ENCODE measurements at regions of chr5 and their contacts with region 1.

Region 1: GRCh38 chr5:152542741-152543140 is 137.7 kb upstream of the NMUR2 start:
- DNase-seq: peak; percentile 3 to 17 (median 9)
- H3K4me3 ChIP-seq: no peak overlapping the region
- H3K27ac ChIP-seq: no peak overlapping the region
- H3K4me1 ChIP-seq: no peaks in the 10 kb centered on the region
- H3K27me3 ChIP-seq: peaks cover 0 to 10% (median 2%) of the 10 kb centered on the region in 5 experiments

Region 2: DNA sequence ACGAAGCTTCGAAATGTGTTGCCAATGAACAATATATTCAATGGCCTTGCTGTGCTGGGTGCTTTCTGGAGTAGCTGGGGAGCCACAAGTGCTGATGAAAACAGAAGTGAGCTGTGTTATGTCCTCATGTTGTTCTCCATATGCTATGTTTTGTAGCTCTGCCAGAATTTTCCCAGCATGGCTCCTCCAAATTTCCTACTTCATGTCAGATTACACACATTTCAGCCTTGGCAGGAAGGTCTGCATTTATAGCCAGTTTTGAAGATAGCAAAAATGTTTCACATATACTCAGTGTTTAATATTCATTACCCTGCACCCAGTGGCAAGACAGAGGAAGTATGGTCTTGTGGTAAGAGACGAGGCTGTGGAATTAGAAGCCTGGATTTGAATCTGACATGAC is 115.0 kb before region 1 on chr5:
- CTCF ChIA-PET with region 1: no interaction called
- POLR2A ChIA-PET with region 1: no interaction called
- DNase-seq: no peak
- H3K4me3 ChIP-seq: no peak overlapping the region
- H3K27ac ChIP-seq: no peak overlapping the region
- H3K4me1 ChIP-seq: no peaks in the 10 kb centered on the region
- H3K27me3 ChIP-seq: no peaks in the 10 kb centered on the region

Region 3: GRCh38 chr5:152505442-152506042 is 37.2 kb before region 1 on chr5:
- CTCF ChIA-PET with region 1: no interaction called
- POLR2A ChIA-PET with region 1: no interaction called
- DNase-seq: peak; percentile 39 to 68 (median 68)
- H3K4me3 ChIP-seq: no peak overlapping the region
- H3K27ac ChIP-seq: no peak overlapping the region
- H3K4me1 ChIP-seq: no peaks in the 10 kb centered on the region
- H3K27me3 ChIP-seq: peaks cover 0 to 1% (median 0%) of the 10 kb centered on the region in 5 experiments

Region 4: DNA sequence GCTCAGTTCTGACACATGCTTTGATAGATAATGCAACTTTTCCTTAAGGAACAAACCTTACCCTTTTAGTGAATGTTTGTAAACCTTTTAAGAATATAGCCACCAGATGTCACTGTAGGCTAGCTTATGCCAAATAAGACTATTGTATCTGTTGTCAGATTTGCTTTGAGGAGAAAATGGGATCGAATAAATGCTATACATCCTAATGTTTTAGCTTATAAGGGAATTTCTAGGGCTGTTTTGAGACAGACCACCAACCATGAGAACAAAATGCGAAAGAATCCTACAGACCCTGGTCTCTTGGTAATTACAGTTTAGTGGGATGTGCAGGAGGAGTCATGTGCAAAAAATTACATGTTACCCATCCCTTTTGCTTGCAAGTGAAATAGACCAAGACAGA is 10.0 kb before region 1 on chr5:
- CTCF ChIA-PET with region 1: interaction called, 10 read pairs
- POLR2A ChIA-PET with region 1: no interaction called
- DNase-seq: peak; percentile 45 to 67 (median 60)
- H3K4me3 ChIP-seq: no peak overlapping the region
- H3K27ac ChIP-seq: no peak overlapping the region
- H3K4me1 ChIP-seq: no peaks in the 10 kb centered on the region
- H3K27me3 ChIP-seq: no peaks in the 10 kb centered on the region